ENCODE measurements at regions of chr17 and their contacts with region 1.

Region 1: GRCh38 chr17:54992797-54993639 is 24.5 kb downstream of the STXBP4 start:
- DNase-seq: no peak
- H3K4me3 Mint-ChIP-seq: no peak overlapping the region
- H3K27ac Mint-ChIP-seq: no peak overlapping the region
- H3K4me1 Mint-ChIP-seq: no peaks in the 10 kb centered on the region
- H3K27me3 Mint-ChIP-seq: no peaks in the 10 kb centered on the region

Region 2: DNA sequence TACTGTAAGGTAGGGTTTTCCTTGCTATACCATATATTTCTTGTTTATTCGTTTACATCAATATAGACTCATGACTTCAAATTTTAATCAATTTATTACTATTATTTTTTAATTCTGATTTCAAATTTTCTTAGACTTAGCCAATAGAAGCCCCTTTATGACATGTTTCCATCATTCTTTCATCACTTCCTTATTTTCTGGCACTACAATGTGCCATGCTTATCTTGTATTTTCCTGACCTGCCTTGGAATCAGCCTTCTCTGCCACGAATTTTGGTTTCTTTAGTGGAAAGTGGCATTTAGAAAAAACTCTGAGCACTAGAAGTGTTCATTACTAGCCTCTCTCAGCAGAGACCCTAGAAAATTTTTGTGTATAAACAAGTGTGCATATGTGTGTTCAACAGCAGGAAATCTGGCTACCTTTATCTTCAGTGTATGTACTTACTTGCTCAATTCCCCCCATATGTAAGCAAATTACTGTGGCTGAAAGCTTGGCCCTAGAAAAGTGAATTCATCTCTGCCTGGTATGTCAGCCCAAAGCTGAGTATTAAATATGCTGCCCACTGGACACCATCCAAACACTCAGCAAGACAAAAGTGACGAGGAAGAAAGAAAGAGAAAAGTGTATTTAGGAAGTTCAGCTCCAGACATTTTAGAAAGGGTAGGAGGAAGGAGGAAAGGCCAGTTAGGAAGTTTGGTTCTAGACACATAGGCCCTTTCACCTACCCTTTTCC is 20.4 kb before region 1 on chr17:
- CTCF ChIA-PET with region 1: interaction called, 11 read pairs
- POLR2A ChIA-PET with region 1: interaction called, 5 read pairs
- DNase-seq: no peak
- H3K4me3 Mint-ChIP-seq: no peak overlapping the region
- H3K27ac Mint-ChIP-seq: no peak overlapping the region
- H3K4me1 Mint-ChIP-seq: peaks cover 10% of the 10 kb centered on the region
- H3K27me3 Mint-ChIP-seq: no peaks in the 10 kb centered on the region

Region 3: DNA sequence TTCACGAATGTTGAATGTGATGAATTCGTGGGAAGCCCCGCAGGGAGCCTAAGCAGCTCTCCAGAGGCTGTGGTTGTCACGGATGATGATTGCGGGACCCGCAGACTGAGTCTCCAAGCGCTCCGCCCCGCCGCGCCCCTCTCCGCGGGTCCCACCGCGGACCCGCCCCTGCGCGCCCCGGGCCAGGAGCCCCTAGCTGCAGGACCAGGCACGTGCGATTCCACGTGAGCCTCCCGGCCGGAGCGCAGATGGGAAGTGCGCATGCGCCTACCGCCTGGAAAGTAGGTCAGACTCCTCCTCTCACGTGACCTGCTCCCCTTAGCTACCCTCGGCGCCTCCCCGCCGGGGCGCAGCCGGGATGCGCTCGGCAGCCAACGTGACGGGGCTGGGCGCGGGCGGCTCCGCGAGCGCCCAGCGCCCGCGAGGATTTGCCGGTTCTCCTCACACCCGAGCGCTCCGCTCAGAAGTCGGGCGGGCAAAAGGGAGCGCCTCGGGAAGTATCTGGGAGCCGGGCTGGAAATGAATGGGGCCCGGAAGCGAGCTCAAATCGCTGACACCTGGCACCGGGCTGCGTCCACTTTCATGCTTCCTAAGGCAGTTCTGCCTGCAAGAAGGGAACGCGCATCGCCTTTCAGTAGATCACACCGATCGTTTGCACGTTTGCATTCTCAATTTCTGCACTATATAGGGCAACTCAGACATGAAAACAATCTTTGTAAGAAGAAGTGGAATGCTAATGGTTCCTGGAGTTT is 245.3 kb after region 1 on chr17:
- CTCF ChIA-PET with region 1: interaction called, 14 read pairs
- POLR2A ChIA-PET with region 1: no interaction called
- DNase-seq: peak; percentile 87
- H3K4me3 Mint-ChIP-seq: peak overlapping the region; percentile 77
- H3K27ac Mint-ChIP-seq: peak overlapping the region; percentile 26
- H3K4me1 Mint-ChIP-seq: peaks cover 19% of the 10 kb centered on the region
- H3K27me3 Mint-ChIP-seq: peaks cover 23% of the 10 kb centered on the region

Region 4: GRCh38 chr17:55348749-55349354 is 355.8 kb after region 1 on chr17:
- CTCF ChIA-PET with region 1: interaction called, 76 read pairs
- POLR2A ChIA-PET with region 1: no interaction called
- DNase-seq: peak; percentile 46
- H3K4me3 Mint-ChIP-seq: no peak overlapping the region
- H3K27ac Mint-ChIP-seq: no peak overlapping the region
- H3K4me1 Mint-ChIP-seq: peaks cover 48% of the 10 kb centered on the region
- H3K27me3 Mint-ChIP-seq: no peaks in the 10 kb centered on the region

Region 5: DNA sequence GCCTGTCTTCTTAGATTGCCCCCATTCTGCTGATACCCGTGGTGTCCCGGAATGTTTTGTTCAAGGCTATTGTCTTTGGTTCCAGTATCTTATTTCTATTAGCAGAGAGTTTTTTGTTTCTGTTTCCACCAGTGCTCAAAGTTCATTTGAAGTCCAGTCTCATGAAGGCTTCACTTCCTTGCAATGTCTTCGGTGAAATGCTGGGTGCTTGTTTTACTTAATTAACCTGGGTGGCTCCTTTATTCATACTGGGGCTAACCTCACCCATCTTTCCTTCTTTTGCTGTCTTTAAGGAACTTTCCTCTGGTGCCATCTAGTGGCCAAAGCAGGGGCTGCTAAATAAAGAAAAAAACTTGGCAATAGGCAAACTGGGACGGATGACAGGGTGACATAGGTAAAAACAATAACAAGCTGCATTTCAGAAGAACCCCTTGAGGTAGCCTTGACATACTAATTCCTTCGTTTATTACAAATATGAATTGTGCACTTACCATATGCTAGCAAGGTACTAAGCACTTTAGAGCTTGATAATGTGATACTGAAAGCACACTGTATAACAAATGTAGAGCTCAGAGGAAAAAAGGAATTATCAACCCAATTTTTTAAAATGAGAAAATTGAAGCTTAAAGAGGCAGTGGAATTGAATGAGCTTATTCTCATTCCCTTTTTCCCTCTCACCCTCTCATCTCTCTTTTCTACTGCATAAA is 521.0 kb after region 1 on chr17:
- CTCF ChIA-PET with region 1: interaction called, 13 read pairs
- POLR2A ChIA-PET with region 1: no interaction called
- DNase-seq: peak; percentile 67
- H3K4me3 Mint-ChIP-seq: no peak overlapping the region
- H3K27ac Mint-ChIP-seq: no peak overlapping the region
- H3K4me1 Mint-ChIP-seq: peaks cover 17% of the 10 kb centered on the region
- H3K27me3 Mint-ChIP-seq: peaks cover 14% of the 10 kb centered on the region